K562 (cell line): ENCODE measurements at regions of chr5 and their contacts with region 1.

Region 1: DNA sequence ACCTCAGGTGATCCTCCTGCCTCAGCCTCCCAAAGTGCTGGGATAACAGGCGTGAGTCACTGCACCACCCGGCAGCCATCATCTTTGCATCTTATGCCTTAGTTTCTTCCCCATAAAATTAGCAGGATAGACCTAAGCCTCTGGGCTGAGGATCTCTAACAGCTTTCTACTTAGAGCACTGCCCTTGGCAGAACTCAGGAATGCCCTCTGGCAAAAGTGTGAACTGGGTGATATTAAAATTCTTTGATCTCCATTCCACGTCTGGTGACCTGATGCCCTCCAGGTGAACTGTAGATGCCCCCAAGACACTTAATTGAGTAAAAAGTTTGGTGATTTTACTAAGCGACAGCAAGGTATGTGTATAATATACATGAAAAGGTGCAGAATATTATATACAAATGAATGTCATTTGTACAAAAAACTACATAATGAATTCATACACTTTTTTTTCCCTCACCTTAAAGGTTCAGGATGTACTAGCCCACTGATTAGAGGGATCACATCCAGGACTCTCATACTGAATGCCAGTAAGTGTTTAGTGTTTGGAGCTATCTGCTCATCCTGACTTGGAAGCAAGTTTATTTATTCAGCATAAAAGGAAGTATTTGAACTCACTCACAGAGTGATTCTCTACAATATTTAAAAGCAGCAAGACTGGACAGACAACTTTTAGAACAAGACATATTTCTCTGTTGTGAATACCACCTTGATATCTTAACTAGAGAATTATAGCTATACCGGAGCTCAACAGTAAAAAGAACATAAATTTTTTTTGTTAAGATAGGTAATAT is 15.0 kb upstream of the IQGAP2 start:
- DNase-seq: no peak
- ATAC-seq: no peak
- H3K4me3 ChIP-seq: no peak overlapping the region
- H3K27ac ChIP-seq: no peak overlapping the region
- H3K4me1 ChIP-seq: peaks cover 2 to 5% of the 10 kb centered on the region in 2 experiments; a peak in 2 of 5 replicates
- H3K27me3 ChIP-seq: no peaks in the 10 kb centered on the region
- CTCF ChIP-seq: no peak
- EP300 ChIP-seq: no peak
- POLR2A ChIP-seq: no peak
- RAD21 ChIP-seq: no peak

Region 2: GRCh38 chr5:76372323-76373054 is 15.6 kb before region 1 on chr5:
- CTCF ChIA-PET with region 1: no interaction called
- POLR2A ChIA-PET with region 1: interaction called, 10 read pairs
- in situ Hi-C with region 1: no loop called
- intact Hi-C with region 1: no loop called
- DNase-seq: peak; percentile 79 to 91 (median 84)
- ATAC-seq: peak; percentile 90
- H3K4me3 ChIP-seq: no peak overlapping the region
- H3K27ac ChIP-seq: peak overlapping the region; percentile 88; the same call in 2 of the 3 replicates
- H3K4me1 ChIP-seq: peaks cover 24 to 48% of the 10 kb centered on the region in 2 experiments
- H3K27me3 ChIP-seq: no peaks in the 10 kb centered on the region
- CTCF ChIP-seq: no peak
- EP300 ChIP-seq: peak; percentile 95
- POLR2A ChIP-seq: no peak; the same call in 1 of the 2 replicates
- RAD21 ChIP-seq: peak in 1 of 2 experiments; percentile 34; a peak in 1 of 4 replicates